ENCODE measurements at regions of chr2 and their contacts with region 1.

Region 1: DNA sequence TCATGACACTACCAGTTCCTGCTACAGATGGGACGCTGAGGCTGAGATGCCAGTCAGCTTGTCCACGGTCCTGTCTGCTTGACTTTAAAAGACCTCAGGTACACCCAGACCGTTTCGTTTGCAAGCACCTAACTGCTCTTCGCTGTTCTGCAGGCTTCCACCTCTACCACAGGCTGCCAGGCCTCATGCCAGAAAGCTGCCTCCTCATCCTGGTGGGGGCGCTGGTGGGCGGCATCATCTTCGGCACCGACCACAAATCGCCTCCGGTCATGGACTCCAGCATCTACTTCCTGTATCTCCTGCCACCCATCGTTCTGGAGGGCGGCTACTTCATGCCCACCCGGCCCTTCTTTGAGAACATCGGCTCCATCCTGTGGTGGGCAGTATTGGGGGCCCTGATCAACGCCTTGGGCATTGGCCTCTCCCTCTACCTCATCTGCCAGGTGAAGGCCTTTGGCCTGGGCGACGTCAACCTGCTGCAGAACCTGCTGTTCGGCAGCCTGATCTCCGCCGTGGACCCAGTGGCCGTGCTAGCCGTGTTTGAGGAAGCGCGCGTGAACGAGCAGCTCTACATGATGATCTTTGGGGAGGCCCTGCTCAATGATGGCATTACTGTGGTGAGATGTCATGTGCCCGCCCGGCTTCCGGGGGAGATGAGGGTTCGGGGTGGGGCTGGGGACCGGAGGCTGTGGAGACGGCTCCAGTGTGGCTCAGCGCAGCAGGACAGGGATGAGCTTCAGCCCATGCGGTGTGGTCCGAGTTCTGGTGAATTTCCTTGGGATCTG is 5.9 kb downstream of the SLC9A4 start:
- DNase-seq: no peak
- ATAC-seq: no peak
- H3K4me3 ChIP-seq: no peak overlapping the region
- H3K27ac ChIP-seq: no peak overlapping the region
- H3K4me1 ChIP-seq: no peaks in the 10 kb centered on the region
- CTCF ChIP-seq: no peak
- EP300 ChIP-seq: no peak
- POLR2A ChIP-seq: no peak
- RAD21 ChIP-seq: no peak

Region 2: DNA sequence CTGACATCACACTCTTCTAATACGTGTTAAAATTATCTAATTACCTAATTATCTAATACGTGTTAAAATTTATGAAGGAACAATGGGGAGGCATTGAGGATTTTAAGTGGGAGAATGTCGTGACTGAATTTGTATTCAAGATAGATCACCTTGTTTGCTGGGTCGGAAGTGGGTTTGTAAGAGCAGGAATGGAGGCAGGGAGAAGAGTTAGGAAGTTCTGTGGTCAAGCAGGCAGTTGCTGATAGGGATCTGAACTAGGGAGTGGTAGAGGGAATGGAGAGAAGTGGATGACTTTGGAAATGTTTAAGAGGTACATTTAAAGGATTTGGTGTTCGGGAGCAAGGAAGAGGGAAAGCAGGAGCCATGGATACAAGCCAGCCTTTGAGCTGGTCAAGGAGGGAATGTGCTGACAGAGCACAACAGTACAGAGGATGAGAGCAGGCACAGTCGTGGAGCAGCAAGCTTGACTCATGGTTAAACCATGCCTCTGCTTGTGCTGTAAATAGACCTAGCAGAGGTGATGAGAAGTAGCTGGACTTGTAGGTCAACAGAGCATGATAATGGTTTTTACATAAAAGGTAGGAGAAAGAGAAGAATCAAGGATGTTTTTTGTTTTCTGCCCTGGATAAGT is 39.7 kb before region 1 on chr2:
- CTCF ChIA-PET with region 1: no interaction called
- POLR2A ChIA-PET with region 1: no interaction called
- DNase-seq: peak in 1 of 2 experiments; percentile 14
- ATAC-seq: peak in 1 of 2 experiments; percentile 51; a peak in 1 of 6 replicates
- H3K4me3 ChIP-seq: no peak overlapping the region
- H3K27ac ChIP-seq: no peak overlapping the region
- H3K4me1 ChIP-seq: no peaks in the 10 kb centered on the region
- CTCF ChIP-seq: no peak
- EP300 ChIP-seq: no peak
- POLR2A ChIP-seq: no peak
- RAD21 ChIP-seq: no peak

Region 3: DNA sequence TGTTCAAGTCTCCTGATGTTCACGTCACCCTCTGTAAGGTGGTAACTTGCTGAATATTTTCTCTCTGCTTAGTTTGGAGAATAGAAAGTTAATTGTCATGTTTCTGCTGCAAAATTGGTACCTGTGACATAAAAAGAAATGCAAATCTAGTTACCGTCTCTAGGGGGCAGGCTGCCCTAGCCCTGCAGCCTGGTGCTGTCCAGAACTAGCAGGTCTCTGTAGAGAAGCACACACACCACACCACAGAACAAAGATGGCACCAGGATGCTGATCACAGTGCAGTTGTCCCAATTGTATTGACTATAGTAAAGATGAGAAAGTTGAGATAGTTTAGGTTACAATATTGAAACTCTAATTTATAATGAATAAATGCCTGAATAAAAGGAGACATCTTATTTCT is 41.1 kb after region 1 on chr2:
- CTCF ChIA-PET with region 1: no interaction called
- POLR2A ChIA-PET with region 1: no interaction called
- DNase-seq: peak; percentile 14 to 61
- ATAC-seq: peak; percentile 72 to 87; a peak in 4 of 6 replicates
- H3K4me3 ChIP-seq: no peak overlapping the region
- H3K27ac ChIP-seq: no peak overlapping the region
- H3K4me1 ChIP-seq: peaks cover 1% of the 10 kb centered on the region; the same call in 1 of the 3 replicates
- CTCF ChIP-seq: peak; percentile 54
- EP300 ChIP-seq: no peak
- POLR2A ChIP-seq: no peak
- RAD21 ChIP-seq: peak; percentile 50 to 73; a peak in 4 of 5 replicates

Region 4: GRCh38 chr2:102703748-102704147 is 224.9 kb after region 1 on chr2:
- CTCF ChIA-PET with region 1: interaction called, 52 read pairs
- POLR2A ChIA-PET with region 1: no interaction called
- DNase-seq: peak; percentile 47 to 55
- ATAC-seq: peak; percentile 83 to 93
- H3K4me3 ChIP-seq: no peak overlapping the region
- H3K27ac ChIP-seq: no peak overlapping the region
- H3K4me1 ChIP-seq: peaks cover 9% of the 10 kb centered on the region
- CTCF ChIP-seq: peak; percentile 72
- EP300 ChIP-seq: no peak
- POLR2A ChIP-seq: no peak
- RAD21 ChIP-seq: peak; percentile 76 to 78

Region 5: DNA sequence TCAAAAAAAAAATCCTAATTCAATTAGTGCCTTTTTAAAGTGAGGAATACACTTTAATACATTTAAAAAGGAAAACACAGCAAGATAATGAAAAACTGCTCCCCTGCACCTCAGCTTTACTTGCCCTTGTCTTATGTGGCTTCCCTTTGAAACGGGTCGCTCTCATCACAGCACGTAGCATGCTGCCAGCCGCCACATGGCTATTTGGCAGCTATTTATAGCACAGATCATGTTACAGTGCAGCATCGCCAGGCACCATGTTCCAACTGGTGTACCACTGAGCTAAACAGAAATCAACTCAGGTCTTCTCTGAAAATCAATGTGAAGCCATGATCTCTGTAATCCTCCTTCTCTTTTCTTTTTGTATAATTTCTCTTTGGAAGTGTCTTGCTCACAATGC is 348.0 kb after region 1 on chr2:
- CTCF ChIA-PET with region 1: no interaction called
- POLR2A ChIA-PET with region 1: no interaction called
- DNase-seq: no peak
- ATAC-seq: no peak
- H3K4me3 ChIP-seq: no peak overlapping the region
- H3K27ac ChIP-seq: no peak overlapping the region
- H3K4me1 ChIP-seq: no peaks in the 10 kb centered on the region
- CTCF ChIP-seq: no peak
- EP300 ChIP-seq: no peak
- POLR2A ChIP-seq: no peak
- RAD21 ChIP-seq: no peak